Left lung (tissue), 14 donors: ENCODE measurements at regions of chr12 and their contacts with region 1.

Region 1: DNA sequence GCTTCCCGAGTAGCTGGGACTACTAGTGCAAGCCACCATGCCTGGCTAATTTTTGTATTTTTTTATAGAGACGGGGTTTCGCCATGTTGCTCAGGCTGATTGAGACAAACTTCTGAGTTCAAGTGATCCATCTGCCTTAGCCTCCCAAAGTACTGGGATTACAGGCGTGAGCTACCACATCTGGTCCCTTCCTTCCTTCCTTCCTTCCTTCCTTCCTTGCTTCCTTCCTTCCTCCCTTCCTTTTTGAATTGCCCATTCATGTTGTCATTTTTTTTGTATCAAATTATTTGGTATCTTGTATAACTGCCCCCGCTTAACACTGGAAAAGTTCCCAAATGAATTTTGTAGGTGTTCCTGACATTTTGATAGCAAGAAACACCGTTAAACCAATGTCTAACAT is 11.7 kb downstream of the RAD9B start:
- DNase-seq: no peak
- ATAC-seq: no peak
- H3K4me3 ChIP-seq: no peak overlapping the region
- H3K27ac ChIP-seq: no peak overlapping the region
- H3K4me1 ChIP-seq: peaks cover 3 to 5% of the 10 kb centered on the region in 2 donors
- H3K27me3 ChIP-seq: no peaks in the 10 kb centered on the region
- CTCF ChIP-seq: no peak

Region 2: GRCh38 chr12:110583137-110584059 is 69.6 kb after region 1 on chr12 and contains the start of gene PPTC7:
- intact Hi-C with region 1: no loop called
- DNase-seq: peak; percentile 95 to 99 (median 98)
- ATAC-seq: peak; percentile 89
- H3K4me3 ChIP-seq: peak within 1 kb of the TSS; percentile 85 to 90
- H3K27ac ChIP-seq: peak within 1 kb of the TSS; percentile 82 to 89
- H3K4me1 ChIP-seq: peaks cover 20 to 68% of the 10 kb centered on the region in 2 donors
- H3K27me3 ChIP-seq: no peaks in the 10 kb centered on the region
- CTCF ChIP-seq: no peak
- polyA plus RNA-seq, gene PPTC7: 13.3 to 17.0 (median 14.7) TPM

Region 3: DNA sequence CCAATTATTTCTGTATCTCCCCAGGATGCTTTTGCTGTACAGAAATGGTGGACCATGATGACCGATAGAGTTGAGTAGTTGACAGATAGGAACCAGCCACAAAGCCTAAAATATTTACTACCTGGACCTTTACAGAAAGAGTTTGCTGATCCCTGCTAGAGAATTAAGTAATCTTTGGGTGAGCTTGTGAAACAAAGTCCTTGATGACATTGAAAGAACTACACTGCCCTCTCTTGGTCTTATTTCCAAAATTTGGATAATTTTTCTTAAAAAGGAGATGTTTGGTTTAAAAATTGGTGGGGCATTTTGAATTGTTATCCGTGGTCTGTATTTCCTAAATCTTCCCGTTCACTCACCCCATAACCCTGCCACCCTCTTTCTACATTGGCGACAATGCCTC is 86.4 kb after region 1 on chr12:
- intact Hi-C with region 1: loop called in 1 of 2 experiments (anchors 5 kb)
- DNase-seq: peak in 1 of 4 donors; percentile 53
- ATAC-seq: peak; percentile 77
- H3K4me3 ChIP-seq: no peak overlapping the region
- H3K27ac ChIP-seq: no peak overlapping the region
- H3K4me1 ChIP-seq: peaks cover 0 to 24% of the 10 kb centered on the region in 2 donors
- H3K27me3 ChIP-seq: no peaks in the 10 kb centered on the region
- CTCF ChIP-seq: peak; percentile 15 to 39